PC-9 (cell line): ENCODE measurements at regions of chr6 and their contacts with region 1.

Region 1: DNA sequence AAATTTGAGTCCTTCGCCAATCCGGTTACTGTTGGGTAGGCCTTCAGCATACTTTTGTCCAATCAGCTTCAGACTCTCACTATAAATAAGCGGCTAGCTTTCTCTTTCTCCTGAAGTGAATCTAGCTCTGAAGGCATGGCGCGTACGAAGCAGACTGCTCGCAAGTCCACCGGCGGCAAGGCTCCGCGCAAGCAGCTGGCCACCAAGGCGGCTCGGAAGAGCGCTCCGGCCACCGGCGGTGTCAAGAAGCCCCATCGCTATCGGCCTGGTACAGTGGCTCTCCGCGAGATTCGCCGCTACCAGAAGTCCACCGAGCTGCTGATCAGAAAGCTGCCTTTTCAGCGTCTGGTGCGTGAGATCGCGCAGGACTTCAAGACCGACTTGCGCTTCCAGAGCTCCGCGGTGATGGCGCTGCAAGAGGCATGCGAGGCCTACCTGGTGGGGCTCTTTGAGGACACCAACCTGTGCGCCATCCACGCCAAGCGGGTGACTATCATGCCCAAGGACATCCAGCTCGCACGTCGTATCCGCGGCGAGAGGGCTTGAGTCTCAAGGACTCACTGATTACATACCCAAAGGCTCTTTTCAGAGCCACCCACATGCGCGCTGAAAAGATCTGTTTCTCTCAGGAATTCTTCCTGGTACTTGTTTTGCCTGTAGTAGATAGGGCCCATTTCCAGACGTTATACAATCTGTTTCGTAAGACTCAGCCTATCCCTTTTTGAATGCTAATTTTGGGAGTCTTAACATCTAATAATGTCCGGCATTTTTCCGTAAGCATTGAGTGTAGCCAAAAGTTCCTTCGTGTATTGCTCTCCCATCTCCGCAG is 102.0 kb downstream of the OR2B2 start:
- DNase-seq: peak; percentile 83 to 94
- H3K4me3 ChIP-seq: peak overlapping the region; percentile 72
- H3K27ac ChIP-seq: peak overlapping the region; percentile 70
- H3K4me1 ChIP-seq: peaks cover 38% of the 10 kb centered on the region
- H3K27me3 ChIP-seq: no peaks in the 10 kb centered on the region
- CTCF ChIP-seq: no peak

Region 2: DNA sequence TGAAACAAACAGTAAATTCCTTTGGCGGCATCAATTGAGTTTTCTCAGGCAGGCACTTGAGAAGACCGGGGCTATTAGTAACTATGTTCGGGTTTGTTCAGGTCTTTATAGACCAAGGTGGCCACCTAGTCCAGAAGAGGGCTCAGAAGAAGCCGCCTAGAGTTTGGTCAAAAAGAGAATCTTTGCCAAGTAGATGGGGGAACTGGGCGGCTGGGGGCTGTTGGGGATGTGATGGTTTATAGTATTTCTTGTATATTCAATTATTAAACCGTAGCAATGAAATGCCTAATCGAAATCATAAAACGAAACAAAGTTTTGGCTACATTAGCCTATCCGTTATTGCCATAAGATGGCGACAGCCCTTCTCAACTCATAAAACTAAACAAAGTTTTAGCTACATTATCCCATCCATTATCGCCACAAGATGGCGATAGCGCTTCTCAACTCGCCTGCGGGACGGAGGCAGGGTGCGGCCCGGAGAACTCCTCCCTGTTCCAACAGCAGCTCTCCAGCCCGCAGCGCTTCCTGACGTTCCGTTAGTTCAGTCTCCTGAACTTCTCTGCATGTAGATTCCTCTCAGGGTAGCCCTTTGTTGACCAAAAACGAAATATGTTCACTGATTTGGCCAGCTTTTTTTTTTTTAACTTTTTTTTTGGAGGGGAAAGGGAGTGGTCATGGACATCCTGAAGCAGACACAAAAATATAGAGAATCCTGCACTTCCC is 683.2 kb before region 1 on chr6:
- CTCF ChIA-PET with region 1: interaction called, 5 read pairs
- POLR2A ChIA-PET with region 1: interaction called, 16 read pairs
- intact Hi-C with region 1: loop called (anchors 2 kb)
- DNase-seq: peak; percentile 72 to 83
- H3K4me3 ChIP-seq: peak overlapping the region; percentile 52
- H3K27ac ChIP-seq: no peak overlapping the region
- H3K4me1 ChIP-seq: peaks cover 12% of the 10 kb centered on the region
- H3K27me3 ChIP-seq: no peaks in the 10 kb centered on the region
- CTCF ChIP-seq: peak; percentile 75

Region 3: DNA sequence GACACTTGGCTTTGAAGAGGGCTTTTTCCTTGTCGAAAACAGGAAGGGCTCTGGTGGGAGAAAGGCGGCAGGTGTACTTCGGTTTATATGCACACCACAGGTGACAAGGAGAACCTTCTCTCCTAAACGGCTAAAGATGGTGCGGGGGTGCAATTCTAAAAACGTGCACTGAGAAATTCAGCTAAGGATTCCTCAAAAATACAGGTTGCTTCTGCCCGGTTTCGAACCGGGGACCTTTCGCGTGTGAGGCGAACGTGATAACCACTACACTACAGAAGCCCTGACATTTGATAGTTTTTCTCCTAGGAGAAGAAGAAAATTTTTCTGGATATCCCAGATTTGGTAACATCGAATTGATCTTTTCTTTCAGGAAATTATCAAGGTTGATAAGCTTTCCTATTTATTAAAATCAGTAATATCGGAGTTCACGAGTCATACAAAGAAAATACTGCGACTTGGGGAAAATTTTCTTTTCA is 530.1 kb before region 1 on chr6:
- CTCF ChIA-PET with region 1: no interaction called
- POLR2A ChIA-PET with region 1: interaction called, 14 read pairs
- intact Hi-C with region 1: no loop called
- DNase-seq: peak; percentile 61 to 70
- H3K4me3 ChIP-seq: peak overlapping the region; percentile 60
- H3K27ac ChIP-seq: peak overlapping the region; percentile 3; the same call in 1 of the 2 replicates
- H3K4me1 ChIP-seq: peaks cover 5% of the 10 kb centered on the region
- H3K27me3 ChIP-seq: no peaks in the 10 kb centered on the region
- CTCF ChIP-seq: no peak

Region 4: DNA sequence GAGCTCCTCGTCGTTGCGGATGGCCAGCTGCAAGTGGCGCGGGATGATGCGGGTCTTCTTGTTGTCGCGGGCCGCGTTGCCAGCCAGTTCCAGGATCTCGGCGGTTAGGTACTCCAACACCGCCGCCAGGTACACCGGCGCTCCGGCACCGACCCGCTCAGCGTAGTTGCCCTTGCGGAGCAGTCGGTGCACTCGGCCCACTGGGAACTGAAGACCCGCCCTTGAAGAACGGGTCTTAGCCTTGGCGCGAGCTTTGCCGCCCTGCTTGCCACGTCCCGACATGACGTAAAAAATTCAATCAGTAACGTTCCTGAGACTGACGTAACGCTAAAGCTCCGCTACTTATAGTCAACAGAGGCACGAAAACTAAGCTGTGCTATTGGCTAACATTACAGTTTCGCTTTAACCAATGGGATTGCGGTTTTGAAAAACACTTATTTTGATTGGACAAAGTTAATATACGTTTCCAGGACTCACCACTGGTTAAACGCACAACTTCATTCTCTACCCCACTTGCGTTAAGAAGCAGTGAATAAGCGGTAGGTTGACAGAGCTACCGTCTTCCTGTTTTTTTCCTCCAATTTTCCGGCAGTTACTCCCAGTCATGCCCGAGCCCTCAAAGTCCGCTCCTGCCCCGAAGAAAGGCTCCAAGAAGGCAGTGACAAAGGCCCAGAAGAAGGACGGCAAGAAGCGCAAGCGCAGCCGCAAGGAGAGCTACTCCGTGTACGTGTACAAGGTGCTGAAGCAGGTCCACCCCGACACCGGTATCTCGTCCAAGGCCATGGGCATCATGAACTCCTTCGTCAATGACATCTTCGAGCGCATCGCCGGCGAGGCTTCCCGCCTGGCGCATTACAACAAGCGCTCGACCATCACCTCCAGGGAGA is 28.1 kb after region 1 on chr6:
- CTCF ChIA-PET with region 1: no interaction called
- POLR2A ChIA-PET with region 1: interaction called, 40 read pairs
- intact Hi-C with region 1: loop called (anchors 2 kb)
- DNase-seq: peak; percentile 71 to 85
- H3K4me3 ChIP-seq: peak overlapping the region; percentile 58
- H3K27ac ChIP-seq: peak overlapping the region; percentile 87
- H3K4me1 ChIP-seq: no peaks in the 10 kb centered on the region
- H3K27me3 ChIP-seq: no peaks in the 10 kb centered on the region
- CTCF ChIP-seq: no peak

Region 5: DNA sequence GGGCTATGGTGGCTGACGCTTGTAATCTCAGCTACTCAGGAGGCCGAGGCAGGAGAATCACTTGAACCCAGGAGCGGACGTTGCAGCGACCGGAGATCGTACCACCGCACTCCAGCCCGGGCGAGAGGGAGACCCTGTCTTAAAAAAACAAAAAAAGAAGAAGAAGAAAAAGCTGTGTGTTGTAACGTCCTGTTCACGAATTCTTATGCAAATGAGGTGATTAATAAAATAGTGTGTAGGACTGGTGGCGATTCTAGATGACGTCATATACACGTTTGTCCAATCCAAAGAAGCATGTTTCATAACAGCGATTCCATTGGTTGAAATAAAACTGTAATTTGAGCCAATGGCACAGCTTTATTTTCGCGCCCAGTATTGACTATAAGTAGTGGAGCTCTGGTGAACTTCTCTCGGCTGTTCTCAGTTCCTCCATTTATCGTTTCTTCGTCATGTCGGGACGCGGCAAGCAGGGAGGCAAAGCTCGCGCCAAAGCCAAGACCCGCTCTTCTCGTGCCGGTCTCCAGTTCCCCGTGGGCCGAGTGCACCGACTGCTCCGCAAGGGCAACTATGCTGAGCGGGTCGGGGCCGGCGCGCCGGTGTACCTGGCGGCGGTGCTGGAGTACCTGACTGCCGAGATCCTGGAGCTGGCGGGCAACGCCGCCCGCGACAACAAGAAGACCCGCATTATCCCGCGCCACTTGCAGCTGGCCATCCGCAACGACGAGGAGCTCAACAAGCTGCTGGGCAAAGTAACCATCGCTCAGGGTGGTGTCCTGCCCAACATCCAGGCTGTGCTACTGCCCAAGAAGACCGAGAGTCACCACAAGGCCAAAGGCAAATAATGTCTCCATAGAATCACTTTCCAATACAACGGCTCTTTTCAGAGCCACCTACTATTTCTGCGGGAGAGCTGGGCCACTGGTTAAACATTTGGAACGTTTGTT is 55.0 kb after region 1 on chr6:
- CTCF ChIA-PET with region 1: no interaction called
- POLR2A ChIA-PET with region 1: interaction called, 25 read pairs
- intact Hi-C with region 1: no loop called
- DNase-seq: peak; percentile 67 to 80
- H3K4me3 ChIP-seq: peak overlapping the region; percentile 55
- H3K27ac ChIP-seq: 0 out of 2 replicates have a peak overlapping the region, but pooled peaks have one; percentile 34
- H3K4me1 ChIP-seq: no peaks in the 10 kb centered on the region
- H3K27me3 ChIP-seq: no peaks in the 10 kb centered on the region
- CTCF ChIP-seq: no peak

Region 6: GRCh38 chr6:28080631-28081485 is 270.7 kb after region 1 on chr6:
- CTCF ChIA-PET with region 1: no interaction called
- POLR2A ChIA-PET with region 1: no interaction called
- intact Hi-C with region 1: loop called (anchors 10 kb)
- DNase-seq: peak; percentile 89 to 95
- H3K4me3 ChIP-seq: peak overlapping the region; percentile 86
- H3K27ac ChIP-seq: peak overlapping the region; percentile 98
- H3K4me1 ChIP-seq: peaks cover 15% of the 10 kb centered on the region; the same call in 1 of the 2 replicates
- H3K27me3 ChIP-seq: no peaks in the 10 kb centered on the region
- CTCF ChIP-seq: no peak

Region 7: DNA sequence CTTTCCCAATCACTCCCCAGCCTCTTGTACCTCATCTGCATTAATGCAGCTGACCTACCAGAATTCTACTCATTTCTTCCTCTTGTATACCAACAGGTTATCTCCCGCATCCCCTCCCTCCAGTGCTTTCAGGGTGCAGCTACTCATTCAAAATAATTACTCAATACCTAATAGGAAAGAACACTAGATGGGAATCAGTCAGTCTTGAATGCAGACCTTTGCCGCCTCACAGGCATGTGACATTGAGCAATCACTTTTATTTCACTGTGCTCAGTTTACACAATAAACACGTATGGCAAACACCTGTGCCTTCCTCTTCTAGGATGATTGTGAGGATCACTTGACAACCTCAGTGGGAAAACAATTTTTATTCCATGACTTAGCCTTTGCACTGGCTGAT is 512.5 kb after region 1 on chr6:
- CTCF ChIA-PET with region 1: no interaction called
- POLR2A ChIA-PET with region 1: no interaction called
- intact Hi-C with region 1: no loop called
- DNase-seq: no peak
- H3K4me3 ChIP-seq: no peak overlapping the region
- H3K27ac ChIP-seq: no peak overlapping the region
- H3K4me1 ChIP-seq: no peaks in the 10 kb centered on the region
- H3K27me3 ChIP-seq: no peaks in the 10 kb centered on the region
- CTCF ChIP-seq: no peak

Region 8: DNA sequence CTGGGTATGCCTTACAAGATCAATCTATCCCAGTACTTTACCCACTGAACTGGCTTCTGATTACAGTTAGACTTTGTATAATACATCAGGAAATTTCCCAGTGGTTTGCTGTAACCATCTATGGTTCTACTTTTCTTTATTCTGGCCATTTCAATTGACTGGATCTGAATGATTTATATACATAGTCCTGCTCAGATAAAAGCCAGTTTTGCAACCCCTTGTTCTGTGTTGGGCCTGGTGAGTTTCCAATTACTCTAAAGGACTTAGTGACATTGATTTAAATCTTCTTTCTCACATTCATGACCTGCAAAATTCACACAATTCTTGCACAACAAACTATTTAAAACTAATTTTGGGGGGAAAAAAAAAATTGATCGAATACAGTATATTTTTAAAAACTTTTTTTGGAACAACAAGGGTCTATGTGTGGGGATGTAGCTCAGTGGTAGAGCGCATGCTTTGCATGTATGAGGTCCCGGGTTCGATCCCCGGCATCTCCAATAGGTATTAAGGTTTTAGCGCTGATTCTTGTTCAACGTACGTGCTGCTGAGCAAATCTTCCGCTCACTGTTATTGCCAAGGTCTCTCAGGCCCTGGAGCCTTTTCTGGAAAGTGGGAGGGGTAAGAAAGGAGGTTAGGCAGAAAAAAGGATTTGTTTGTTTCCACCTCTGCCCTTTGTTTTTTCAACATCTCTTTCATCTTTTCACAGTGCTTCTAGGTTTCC is 833.0 kb after region 1 on chr6:
- CTCF ChIA-PET with region 1: no interaction called
- POLR2A ChIA-PET with region 1: no interaction called
- intact Hi-C with region 1: no loop called
- DNase-seq: peak; percentile 61 to 68
- H3K4me3 ChIP-seq: peak overlapping the region; percentile 40; the same call in 1 of the 2 replicates
- H3K27ac ChIP-seq: peak overlapping the region; percentile 33; the same call in 1 of the 2 replicates
- H3K4me1 ChIP-seq: 0 out of 2 replicates have a peak, but pooled peaks cover 5% of the 10 kb centered on the region
- H3K27me3 ChIP-seq: no peaks in the 10 kb centered on the region
- CTCF ChIP-seq: no peak